Activated CD8-positive, alpha-beta memory T cell treated with anti-CD3 and anti-CD28 coated beads, Interleukin-2, amount 10 ng/mL, durations not matched to agents 7 days and 5 days (primary cell): ENCODE measurements at regions of chr19 and their contacts with region 1.

Region 1: GRCh38 chr19:12766051-12766521 is 9.3 kb downstream of the HOOK2 start:
- DNase-seq: peak; percentile 87
- ATAC-seq: peak; percentile 87
- H3K4me3 Mint-ChIP-seq: peak overlapping the region; percentile 24
- H3K27ac Mint-ChIP-seq: no peak overlapping the region
- H3K4me1 Mint-ChIP-seq: peaks cover 9% of the 10 kb centered on the region
- H3K27me3 Mint-ChIP-seq: no peaks in the 10 kb centered on the region

Region 2: DNA sequence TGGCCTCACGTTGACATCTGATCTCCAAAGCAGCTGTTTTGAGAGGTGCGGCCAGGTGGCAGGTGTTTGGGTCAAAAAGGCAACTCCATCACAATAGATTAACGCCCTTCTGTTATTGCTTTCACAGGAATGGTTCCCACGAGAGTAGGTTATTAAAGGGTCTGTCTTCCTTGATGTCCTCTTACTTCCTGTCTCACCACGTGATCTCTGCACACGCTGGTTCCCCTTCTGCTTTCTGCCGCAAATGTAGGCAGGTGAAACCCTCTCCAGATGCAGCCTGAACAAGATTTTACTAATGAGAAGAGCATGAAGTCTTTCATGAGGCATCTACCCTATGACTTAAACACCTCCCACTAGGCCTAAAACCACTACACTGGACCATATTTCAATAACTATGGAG is 192.1 kb before region 1 on chr19:
- CTCF ChIA-PET with region 1: no interaction called
- DNase-seq: no peak
- ATAC-seq: no peak
- H3K4me3 Mint-ChIP-seq: no peak overlapping the region
- H3K27ac Mint-ChIP-seq: no peak overlapping the region
- H3K4me1 Mint-ChIP-seq: peaks cover 6% of the 10 kb centered on the region
- H3K27me3 Mint-ChIP-seq: no peaks in the 10 kb centered on the region

Region 3: DNA sequence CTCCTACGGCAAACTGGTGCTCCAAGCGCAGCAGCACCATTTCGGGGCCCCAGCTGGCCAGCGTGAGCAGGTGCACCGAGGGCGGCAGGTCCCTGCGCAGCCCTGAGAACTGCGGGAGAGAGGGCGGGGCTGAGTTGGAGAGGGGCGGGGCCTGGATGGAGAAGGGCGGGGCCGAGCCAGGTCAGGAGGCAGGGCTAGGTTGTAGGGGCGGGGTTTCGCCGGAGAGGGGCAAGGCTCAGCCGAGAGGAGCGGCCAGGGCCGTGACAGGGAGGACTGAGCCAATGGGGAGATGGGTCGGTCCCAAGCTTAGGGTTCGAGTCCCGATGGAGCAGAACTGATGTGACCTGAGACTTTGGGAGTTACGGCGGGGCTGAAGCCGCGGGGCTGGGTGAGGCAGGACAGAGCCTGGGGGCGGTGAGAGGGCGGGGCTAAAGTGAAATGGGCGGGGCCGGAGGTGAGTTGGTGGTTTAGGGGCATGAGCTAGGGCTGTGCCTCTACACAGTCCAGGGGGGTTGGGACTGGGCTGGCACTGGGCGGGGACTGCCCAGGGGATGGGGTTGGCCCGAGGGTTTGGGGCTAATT is 118.5 kb before region 1 on chr19:
- CTCF ChIA-PET with region 1: no interaction called
- DNase-seq: no peak
- ATAC-seq: peak; percentile 71
- H3K4me3 Mint-ChIP-seq: no peak overlapping the region
- H3K27ac Mint-ChIP-seq: no peak overlapping the region
- H3K4me1 Mint-ChIP-seq: peaks cover 2% of the 10 kb centered on the region
- H3K27me3 Mint-ChIP-seq: no peaks in the 10 kb centered on the region

Region 4: DNA sequence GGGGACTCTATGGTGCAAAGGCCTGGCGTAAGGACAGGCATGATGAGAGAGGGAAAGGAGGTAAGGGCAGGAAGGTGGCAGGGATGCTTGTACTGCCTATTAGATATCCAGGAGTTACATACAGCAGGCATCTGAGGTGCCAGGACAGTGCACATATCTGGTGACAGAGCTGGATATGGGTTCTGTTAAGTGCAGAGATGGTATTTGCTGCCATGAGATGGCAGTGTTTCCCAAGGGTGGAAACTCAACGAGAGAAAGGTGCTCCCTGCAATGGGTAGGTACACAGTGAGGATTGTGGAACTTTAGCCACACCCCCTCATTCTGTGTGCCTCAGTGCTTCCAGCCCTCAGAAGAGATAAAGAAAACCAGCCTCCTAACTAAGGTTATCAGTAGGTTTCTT is 49.2 kb before region 1 on chr19:
- CTCF ChIA-PET with region 1: interaction called, 157 read pairs
- DNase-seq: peak; percentile 60
- ATAC-seq: peak; percentile 60
- H3K4me3 Mint-ChIP-seq: no peak overlapping the region
- H3K27ac Mint-ChIP-seq: no peak overlapping the region
- H3K4me1 Mint-ChIP-seq: peaks cover 28% of the 10 kb centered on the region
- H3K27me3 Mint-ChIP-seq: no peaks in the 10 kb centered on the region

Region 5: DNA sequence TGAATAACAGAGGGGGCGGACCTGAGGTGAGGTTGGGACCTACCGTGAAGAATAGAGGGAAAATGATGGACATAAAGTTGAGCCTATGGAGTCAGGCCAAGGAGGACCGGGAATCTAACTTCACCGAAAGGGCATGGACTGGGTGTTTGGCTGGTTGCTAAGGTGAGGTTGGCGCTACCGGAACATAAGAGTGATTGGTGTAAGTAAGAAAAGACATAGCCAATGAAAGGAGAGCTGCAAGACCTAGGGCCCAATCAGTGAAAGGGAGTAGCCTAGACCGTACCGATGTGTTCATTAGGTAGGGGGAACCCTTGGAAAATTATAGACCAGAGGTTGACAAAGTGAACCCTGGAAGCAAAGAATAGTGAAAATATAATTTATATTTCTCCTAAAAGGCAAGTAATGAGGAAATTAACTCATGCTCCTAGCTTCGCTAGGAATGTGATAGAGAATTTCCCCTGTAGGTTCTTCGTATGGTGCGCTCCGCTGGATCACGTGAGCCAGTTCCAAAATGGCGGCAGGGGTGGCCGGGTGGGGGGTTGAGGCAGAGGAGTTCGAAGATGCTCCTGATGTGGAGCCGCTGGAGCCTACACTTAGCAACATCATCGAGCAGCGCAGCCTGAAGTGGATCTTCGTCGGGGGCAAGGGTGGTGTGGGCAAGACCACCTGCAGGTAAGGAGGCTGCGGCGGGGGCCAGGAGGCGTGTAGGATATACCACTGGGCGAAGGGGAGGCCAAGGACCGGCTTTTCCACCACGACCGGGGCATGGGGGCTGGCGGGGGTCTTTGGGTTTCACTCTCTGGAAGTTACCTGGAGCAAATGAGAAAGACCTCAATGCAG is 28.9 kb before region 1 on chr19 and contains the start of gene GET3:
- CTCF ChIA-PET with region 1: interaction called, 18 read pairs
- DNase-seq: peak; percentile 88
- ATAC-seq: peak; percentile 86
- H3K4me3 Mint-ChIP-seq: peak within 1 kb of the TSS; percentile 99
- H3K27ac Mint-ChIP-seq: peak within 1 kb of the TSS; percentile 94
- H3K4me1 Mint-ChIP-seq: peaks cover 43% of the 10 kb centered on the region
- H3K27me3 Mint-ChIP-seq: no peaks in the 10 kb centered on the region
- total RNA-seq, gene GET3: 68.6 to 84.1 TPM

Region 6: GRCh38 chr19:12777217-12778016 is 11.3 kb after region 1 on chr19:
- CTCF ChIA-PET with region 1: interaction called, 132 read pairs
- DNase-seq: peak; percentile 87
- ATAC-seq: peak; percentile 41
- H3K4me3 Mint-ChIP-seq: peak overlapping the region; percentile 76
- H3K27ac Mint-ChIP-seq: peak overlapping the region; percentile 97
- H3K4me1 Mint-ChIP-seq: peaks cover 37% of the 10 kb centered on the region
- H3K27me3 Mint-ChIP-seq: no peaks in the 10 kb centered on the region

Region 7: GRCh38 chr19:12881172-12881808 is 115.2 kb after region 1 on chr19 and contains the start of gene DNASE2:
- CTCF ChIA-PET with region 1: interaction called, 10 read pairs
- DNase-seq: peak; percentile 96
- ATAC-seq: peak; percentile 83
- H3K4me3 Mint-ChIP-seq: peak within 1 kb of the TSS; percentile 87
- H3K27ac Mint-ChIP-seq: peak within 1 kb of the TSS; percentile 87
- H3K4me1 Mint-ChIP-seq: peaks cover 38% of the 10 kb centered on the region
- H3K27me3 Mint-ChIP-seq: no peaks in the 10 kb centered on the region
- total RNA-seq, gene DNASE2: 32.5 to 34.1 TPM

Region 8: DNA sequence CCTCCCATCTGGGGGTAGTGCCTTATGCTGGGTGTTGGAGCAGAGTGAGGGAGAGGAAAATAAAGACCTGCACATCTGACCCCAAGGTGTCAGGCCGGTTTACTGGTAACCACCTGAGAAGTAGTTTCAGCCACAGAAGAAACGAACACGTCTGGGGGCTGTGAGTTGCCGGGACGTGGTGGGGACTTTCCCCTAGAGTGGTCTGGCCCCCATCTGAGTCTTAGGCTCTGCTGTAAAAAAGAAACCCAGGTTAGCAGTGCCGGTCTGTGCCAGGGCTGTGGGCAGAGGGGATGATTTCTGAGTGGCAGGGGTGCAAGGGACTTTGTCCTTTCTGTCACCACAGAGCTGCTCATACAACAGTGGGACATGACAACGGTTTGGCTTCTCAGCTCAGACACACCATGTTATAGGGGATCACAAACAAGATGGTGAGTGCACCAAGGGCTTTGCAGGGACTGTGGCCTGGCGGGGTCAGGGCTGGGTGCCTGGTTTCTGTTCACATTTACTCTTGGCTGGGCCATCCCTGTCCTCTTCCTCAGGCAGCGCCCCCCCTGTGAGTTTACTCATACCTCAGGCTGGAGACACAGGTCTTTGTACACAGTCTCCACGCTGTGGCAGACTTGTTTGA is 133.9 kb after region 1 on chr19:
- CTCF ChIA-PET with region 1: no interaction called
- DNase-seq: peak; percentile 82
- ATAC-seq: peak; percentile 85
- H3K4me3 Mint-ChIP-seq: peak overlapping the region; percentile 56
- H3K27ac Mint-ChIP-seq: peak overlapping the region; percentile 88
- H3K4me1 Mint-ChIP-seq: peaks cover 26% of the 10 kb centered on the region
- H3K27me3 Mint-ChIP-seq: no peaks in the 10 kb centered on the region